ENCODE measurements at regions of chr16 and their contacts with region 1.

Region 1: GRCh38 chr16:64035337-64035736 is 1086.5 kb downstream of the CDH11 start:
- DNase-seq: no peak

Region 2: GRCh38 chr16:63530208-63530607 is 505.1 kb before region 1 on chr16:
- intact Hi-C with region 1: no loop called
- DNase-seq: no peak

Region 3: DNA sequence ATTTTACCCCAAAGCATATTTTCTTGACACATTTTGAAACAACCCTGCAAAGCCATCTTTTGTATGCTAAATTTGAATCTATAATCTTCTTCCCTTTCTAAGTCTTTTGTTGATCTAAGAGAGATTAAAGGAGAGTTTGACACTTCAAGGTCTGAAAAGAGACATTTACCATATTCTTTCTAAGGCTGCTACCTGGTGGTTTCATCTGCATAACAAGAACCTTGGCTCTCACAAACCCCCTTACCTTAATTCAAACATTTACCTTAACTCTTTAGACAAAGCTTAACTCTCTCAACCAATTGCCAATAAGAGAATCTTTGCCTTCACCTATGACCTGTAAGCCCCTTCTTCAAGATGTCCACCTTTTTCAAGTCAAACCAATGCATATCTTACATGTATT is 57.1 kb before region 1 on chr16:
- intact Hi-C with region 1: loop called (anchors 10 kb)
- DNase-seq: no peak

Region 4: GRCh38 chr16:64184156-64184555 is 148.8 kb after region 1 on chr16:
- intact Hi-C with region 1: no loop called
- DNase-seq: no peak